ENCODE measurements at regions of chr1 and their contacts with region 1.

Region 1: DNA sequence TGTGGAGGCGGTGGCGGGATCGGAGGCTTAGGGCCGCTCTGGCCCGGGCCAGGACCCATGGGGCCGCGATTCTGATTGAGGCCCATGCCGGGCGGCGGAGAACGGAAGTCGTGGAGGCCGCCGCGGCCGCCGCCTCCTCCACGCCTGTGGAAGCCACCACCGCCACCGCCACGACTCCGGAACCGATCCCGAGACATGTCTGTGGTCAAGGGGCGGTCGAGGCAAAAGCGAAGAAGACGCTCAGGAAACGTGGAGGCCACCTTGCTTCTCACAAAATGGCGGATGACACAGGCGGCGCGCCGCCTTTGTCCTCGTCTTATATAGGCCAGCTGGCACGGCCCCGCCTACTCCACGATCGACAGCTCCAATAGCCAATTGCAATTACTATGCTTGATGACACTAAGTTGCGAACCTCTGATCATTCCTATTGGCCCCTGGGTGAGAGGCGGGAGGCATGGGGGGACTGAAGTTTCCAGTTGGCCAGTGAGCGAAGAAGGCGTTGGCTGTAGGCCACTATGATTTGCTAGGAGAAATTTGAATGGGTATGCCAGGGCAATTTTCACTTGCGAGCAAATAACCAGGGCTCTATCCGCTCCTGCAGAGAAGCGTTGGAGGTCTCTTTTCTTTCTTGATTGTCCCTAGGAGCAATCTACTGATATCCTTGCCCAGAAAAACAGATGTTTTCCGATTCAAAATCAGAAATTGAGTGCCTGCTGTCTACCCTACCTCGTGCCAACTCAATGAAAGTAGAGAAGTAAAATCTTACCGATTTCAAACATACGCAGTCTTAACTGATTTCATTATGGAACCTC is at the start of gene SFPQ:
- DNase-seq: peak; percentile 99
- H3K4me3 ChIP-seq: peak within 1 kb of the TSS; percentile 95 to 100 (median 97)
- H3K27ac ChIP-seq: peak within 1 kb of the TSS; percentile 98 to 100 (median 100)
- H3K4me1 ChIP-seq: peaks cover 0 to 42% (median 37%) of the 10 kb centered on the region in 4 donors
- H3K27me3 ChIP-seq: no peaks in the 10 kb centered on the region
- CTCF ChIP-seq: no peak
- EP300 ChIP-seq: no peak
- POLR2A ChIP-seq: peak; percentile 80 to 93
- total RNA-seq, gene SFPQ: 118 to 194 (median 153) TPM

Region 2: DNA sequence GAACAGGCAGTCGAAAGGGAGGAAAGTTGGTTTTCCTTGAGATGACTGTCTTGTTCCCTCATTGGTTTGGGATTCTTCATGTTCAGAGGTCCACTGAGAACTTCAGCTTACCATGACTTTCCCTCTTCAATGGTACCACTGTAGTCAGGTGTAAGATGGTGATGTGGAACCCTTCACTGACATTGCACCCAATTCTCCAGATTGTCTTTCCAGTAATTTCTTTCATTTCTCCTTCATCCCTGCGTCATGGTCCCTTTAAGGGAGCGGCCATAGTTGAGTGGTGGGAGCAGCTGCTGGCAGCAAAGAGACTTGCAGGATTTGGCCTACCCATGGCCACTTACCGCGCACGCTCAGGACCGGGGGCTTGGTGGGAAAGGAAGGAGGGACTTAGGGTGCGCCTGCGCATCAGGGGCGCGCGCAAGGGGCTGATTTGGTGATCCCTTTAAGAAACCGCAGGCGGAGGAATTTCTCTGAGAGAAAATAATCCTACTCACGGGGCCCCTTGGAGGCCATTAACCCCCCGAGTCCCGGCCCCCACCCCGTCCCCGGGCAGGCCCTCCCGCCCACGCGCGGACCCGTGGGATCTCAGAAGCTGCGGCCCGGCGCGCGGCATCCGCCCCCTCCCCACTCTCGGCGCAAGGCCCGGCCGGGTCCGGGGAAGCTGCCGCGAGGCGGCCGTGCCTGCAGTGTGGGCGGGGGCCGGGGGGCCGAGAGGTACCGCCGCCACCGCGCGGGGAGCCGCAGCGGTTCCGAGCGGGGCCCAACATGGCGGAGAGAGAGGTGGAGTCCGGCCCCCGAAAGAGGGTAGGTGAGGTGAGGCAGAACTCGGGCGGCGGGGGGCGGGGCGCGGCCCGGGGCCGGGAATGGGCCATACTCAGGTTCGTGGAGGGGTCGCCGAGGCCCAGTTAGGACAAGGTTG is 75.5 kb after region 1 on chr1 and contains the start of gene ZMYM4:
- intact Hi-C with region 1: loop called (anchors 5 kb)
- DNase-seq: peak; percentile 97
- H3K4me3 ChIP-seq: peak within 1 kb of the TSS; percentile 89 to 99 (median 97)
- H3K27ac ChIP-seq: peak within 1 kb of the TSS; percentile 84 to 95 (median 94)
- H3K4me1 ChIP-seq: peaks cover 0 to 46% (median 34%) of the 10 kb centered on the region in 4 donors
- H3K27me3 ChIP-seq: no peaks in the 10 kb centered on the region
- CTCF ChIP-seq: no peak
- EP300 ChIP-seq: no peak
- POLR2A ChIP-seq: no peak
- total RNA-seq, gene ZMYM4: 36.7 to 46.0 (median 40.8) TPM

Region 3: GRCh38 chr1:35715568-35716002 is 522.5 kb after region 1 on chr1:
- intact Hi-C with region 1: no loop called
- DNase-seq: peak; percentile 79
- H3K4me3 ChIP-seq: no peak overlapping the region
- H3K27ac ChIP-seq: no peak overlapping the region
- H3K4me1 ChIP-seq: peaks cover 0 to 43% (median 37%) of the 10 kb centered on the region in 4 donors
- H3K27me3 ChIP-seq: no peaks in the 10 kb centered on the region
- CTCF ChIP-seq: peak; percentile 28 to 79 (median 66)
- EP300 ChIP-seq: no peak
- POLR2A ChIP-seq: no peak

Region 4: DNA sequence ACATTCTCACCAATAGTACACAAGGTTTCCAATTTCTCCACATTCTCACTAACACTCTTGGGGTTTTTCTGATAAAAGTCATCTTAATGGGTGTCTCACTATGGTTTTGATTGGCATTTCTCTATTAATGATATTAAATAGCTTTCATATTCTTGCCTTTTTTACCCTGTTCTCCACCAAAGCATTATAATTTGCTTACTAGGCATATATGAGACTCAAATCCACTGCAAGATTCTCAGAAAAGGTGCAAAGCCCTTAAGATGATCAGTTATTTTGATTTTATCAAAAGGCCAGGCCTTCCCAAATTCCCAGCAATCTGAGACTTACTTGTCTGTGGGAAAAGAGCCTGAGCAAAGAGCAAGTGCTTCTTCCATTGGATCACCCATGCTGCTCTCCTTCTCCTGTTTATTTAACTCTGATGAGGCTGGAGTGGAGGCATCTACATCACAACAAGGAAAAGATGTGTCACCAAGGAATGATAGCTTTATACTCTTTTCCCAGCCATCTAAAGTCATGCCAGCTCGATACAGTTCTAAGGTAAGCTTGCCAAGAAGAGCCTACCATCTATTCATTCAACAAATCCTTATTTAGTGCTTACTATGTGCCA is 552.2 kb after region 1 on chr1:
- intact Hi-C with region 1: no loop called
- DNase-seq: no peak
- H3K4me3 ChIP-seq: no peak overlapping the region
- H3K27ac ChIP-seq: no peak overlapping the region
- H3K4me1 ChIP-seq: no peaks in the 10 kb centered on the region
- H3K27me3 ChIP-seq: no peaks in the 10 kb centered on the region
- CTCF ChIP-seq: no peak
- EP300 ChIP-seq: no peak
- POLR2A ChIP-seq: no peak

Region 5: GRCh38 chr1:36055706-36056105 is 862.6 kb after region 1 on chr1:
- intact Hi-C with region 1: no loop called
- DNase-seq: no peak
- H3K4me3 ChIP-seq: no peak overlapping the region
- H3K27ac ChIP-seq: no peak overlapping the region
- H3K4me1 ChIP-seq: no peaks in the 10 kb centered on the region
- H3K27me3 ChIP-seq: no peaks in the 10 kb centered on the region
- CTCF ChIP-seq: no peak
- EP300 ChIP-seq: no peak
- POLR2A ChIP-seq: no peak